Activated B cell treated with CpG ODN at 0.5 μM for 24 hours (primary cell): ENCODE measurements at regions of chr20 and their contacts with region 1.

Region 1: GRCh38 chr20:45971675-45972499 is at the start of gene ZNF335:
- DNase-seq: peak; percentile 99
- ATAC-seq: peak; percentile 82
- H3K4me3 Mint-ChIP-seq: peak within 1 kb of the TSS; percentile 94
- H3K27ac Mint-ChIP-seq: peak within 1 kb of the TSS; percentile 100
- H3K4me1 Mint-ChIP-seq: peaks cover 25% of the 10 kb centered on the region
- H3K27me3 Mint-ChIP-seq: no peaks in the 10 kb centered on the region
- CTCF ChIP-seq: no peak
- total RNA-seq, gene ZNF335: 39.2 and 49.6 TPM in 2 replicates

Region 2: DNA sequence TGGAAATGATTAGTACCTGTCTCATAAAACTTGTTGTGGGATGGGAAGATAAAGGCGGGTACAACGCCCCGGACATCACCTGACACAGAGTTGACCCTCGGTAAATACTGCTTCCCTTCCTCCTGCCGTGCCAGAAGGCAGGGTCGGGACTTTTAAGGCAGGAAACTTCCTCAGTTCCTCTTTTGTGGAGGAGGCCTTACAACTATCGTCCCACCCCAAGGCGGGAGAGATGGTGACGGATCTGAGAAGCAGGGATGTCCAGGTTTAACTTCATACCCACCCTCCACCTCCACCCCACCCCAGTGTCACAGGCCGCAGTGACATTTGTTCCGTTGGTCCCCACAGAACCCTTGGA is 179.6 kb before region 1 on chr20:
- CTCF ChIA-PET with region 1: no interaction called
- POLR2A ChIA-PET with region 1: interaction called, 10 read pairs
- intact Hi-C with region 1: loop called (anchors 2 kb)
- DNase-seq: no peak
- ATAC-seq: peak; percentile 28
- H3K4me3 Mint-ChIP-seq: peak overlapping the region; percentile 92
- H3K27ac Mint-ChIP-seq: peak overlapping the region; percentile 82
- H3K4me1 Mint-ChIP-seq: peaks cover 16% of the 10 kb centered on the region
- H3K27me3 Mint-ChIP-seq: no peaks in the 10 kb centered on the region
- CTCF ChIP-seq: no peak

Region 3: DNA sequence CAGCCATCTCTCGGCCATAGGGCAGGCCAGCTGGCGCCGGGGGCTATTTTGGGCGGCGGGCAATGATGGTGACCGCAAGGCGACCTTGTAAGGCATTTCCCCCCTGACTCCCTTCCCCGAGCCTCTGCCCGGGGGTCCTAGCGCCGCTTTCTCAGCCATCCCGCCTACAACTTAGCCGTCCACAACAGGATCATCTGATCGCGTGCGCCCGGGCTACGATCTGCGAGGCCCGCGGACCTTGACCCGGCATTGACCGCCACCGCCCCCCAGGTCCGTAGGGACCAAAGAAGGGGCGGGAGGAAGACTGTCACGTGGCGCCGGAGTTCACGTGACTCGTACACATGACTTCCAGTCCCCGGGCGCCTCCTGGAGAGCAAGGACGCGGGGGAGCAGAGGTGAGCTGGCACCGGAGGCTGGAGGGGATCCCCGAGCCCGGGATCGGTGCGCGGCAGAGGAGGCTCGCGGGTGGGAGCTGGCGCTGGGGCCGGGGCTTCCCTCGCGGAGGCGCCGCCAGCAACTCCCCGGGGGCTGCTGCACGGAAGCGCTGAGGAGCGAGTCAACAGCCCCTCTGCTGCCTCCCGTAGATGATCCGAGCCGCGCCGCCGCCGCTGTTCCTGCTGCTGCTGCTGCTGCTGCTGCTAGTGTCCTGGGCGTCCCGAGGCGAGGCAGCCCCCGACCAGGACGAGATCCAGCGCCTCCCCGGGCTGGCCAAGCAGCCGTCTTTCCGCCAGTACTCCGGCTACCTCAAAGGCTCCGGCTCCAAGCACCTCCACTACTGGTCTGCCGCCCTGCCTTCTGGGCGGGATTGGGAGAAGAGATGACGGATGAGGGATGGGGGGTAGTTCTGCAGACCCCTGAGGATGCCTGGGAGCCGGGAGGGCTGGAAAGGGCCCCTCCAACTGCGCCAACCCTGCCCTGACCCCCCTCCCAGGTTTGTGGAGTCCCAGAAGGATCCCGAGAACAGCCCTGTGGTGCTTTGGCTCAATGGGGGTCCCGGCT is 80.6 kb before region 1 on chr20 and contains the starts of genes CTSA and NEURL2:
- CTCF ChIA-PET with region 1: interaction called, 11 read pairs
- POLR2A ChIA-PET with region 1: interaction called, 13 read pairs
- intact Hi-C with region 1: loop called (anchors 1 kb)
- DNase-seq: peak; percentile 86
- ATAC-seq: peak; percentile 87
- H3K4me3 Mint-ChIP-seq: peak within 1 kb of the TSS; percentile 93
- H3K27ac Mint-ChIP-seq: peak within 1 kb of the TSS; percentile 87
- H3K4me1 Mint-ChIP-seq: peaks cover 30% of the 10 kb centered on the region
- H3K27me3 Mint-ChIP-seq: no peaks in the 10 kb centered on the region
- CTCF ChIP-seq: no peak
- total RNA-seq, gene CTSA: 61.9 and 67.2 TPM in 2 replicates
- total RNA-seq, gene NEURL2: 1.1 and 2.0 TPM in 2 replicates

Region 4: DNA sequence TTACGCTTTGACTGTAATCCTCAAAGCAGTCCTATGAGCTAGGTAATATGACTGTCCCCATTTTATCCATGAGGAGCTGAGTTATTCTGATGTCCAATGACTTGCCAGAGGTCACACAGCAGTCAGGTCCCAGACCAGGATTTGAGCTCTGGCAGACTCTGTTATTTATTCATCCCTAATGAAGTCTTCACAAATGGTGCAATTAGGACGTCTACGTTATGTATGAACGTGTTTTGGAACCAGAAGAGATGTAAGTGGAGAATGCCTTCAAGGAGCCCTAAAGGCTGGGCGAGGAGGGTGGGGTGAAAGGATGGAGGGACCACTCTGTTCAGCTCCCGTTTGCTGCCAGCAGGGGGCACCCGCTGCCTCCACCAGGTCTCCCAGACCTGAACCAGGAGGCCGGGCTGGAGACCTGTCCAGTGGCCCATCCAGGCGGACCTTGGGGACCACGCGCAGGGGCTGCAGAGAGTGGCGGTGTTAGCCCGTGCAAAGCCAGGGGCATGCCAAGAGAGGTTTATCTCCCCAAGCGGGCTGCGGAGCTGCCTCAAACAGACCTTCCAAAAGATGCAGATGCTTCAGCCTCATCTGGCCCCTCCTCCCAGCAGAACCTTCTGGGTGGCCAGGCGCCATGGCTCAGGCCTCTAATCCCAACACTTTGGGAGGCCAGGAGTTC is 15.4 kb after region 1 on chr20:
- CTCF ChIA-PET with region 1: interaction called, 13 read pairs
- POLR2A ChIA-PET with region 1: interaction called, 3 read pairs
- intact Hi-C with region 1: no loop called
- DNase-seq: peak; percentile 70
- ATAC-seq: peak; percentile 97
- H3K4me3 Mint-ChIP-seq: no peak overlapping the region
- H3K27ac Mint-ChIP-seq: no peak overlapping the region
- H3K4me1 Mint-ChIP-seq: peaks cover 5% of the 10 kb centered on the region
- H3K27me3 Mint-ChIP-seq: peaks cover 13% of the 10 kb centered on the region
- CTCF ChIP-seq: no peak

Region 5: DNA sequence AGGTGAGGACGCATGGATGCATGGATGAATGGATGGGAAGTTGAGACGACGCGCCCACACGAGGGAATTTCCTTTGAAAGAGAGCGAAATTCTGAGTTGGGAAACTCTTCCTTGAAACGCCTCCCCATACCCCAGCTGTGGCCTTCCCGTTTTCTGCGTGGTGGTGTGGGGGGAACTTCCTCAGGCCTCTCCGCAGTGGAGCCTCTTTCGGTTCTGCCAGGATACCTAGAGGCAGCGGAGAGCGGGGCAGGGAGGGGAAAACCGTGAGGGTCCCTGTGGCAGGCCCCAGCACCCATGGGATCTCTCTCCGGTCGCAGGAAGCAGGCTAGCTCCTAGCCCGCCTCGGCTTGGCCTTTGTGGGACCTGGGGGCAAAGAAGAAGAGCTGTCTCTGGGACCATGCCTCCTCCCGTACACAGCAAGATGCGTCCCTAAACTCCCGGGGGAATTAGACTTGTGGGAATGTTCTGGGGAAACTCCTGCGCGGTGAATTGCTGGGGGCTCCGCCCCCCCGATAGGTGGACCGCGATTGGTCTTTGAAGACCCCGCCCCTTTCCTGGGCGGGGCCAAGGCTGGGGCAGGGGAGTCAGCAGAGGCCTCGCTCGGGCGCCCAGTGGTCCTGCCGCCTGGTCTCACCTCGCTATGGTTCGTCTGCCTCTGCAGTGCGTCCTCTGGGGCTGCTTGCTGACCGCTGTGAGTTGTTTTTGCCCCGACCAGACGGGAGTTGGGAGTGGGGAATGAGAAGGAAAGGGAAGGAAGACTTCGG is 146.0 kb after region 1 on chr20 and contains the start of gene CD40:
- CTCF ChIA-PET with region 1: interaction called, 3 read pairs
- POLR2A ChIA-PET with region 1: interaction called, 12 read pairs
- intact Hi-C with region 1: loop called (anchors 1 kb)
- DNase-seq: peak; percentile 91
- ATAC-seq: peak; percentile 76
- H3K4me3 Mint-ChIP-seq: peak within 1 kb of the TSS; percentile 100
- H3K27ac Mint-ChIP-seq: peak within 1 kb of the TSS; percentile 100
- H3K4me1 Mint-ChIP-seq: peaks cover 60% of the 10 kb centered on the region
- H3K27me3 Mint-ChIP-seq: no peaks in the 10 kb centered on the region
- CTCF ChIP-seq: no peak
- total RNA-seq, gene CD40: 410 and 464 TPM in 2 replicates

Region 6: DNA sequence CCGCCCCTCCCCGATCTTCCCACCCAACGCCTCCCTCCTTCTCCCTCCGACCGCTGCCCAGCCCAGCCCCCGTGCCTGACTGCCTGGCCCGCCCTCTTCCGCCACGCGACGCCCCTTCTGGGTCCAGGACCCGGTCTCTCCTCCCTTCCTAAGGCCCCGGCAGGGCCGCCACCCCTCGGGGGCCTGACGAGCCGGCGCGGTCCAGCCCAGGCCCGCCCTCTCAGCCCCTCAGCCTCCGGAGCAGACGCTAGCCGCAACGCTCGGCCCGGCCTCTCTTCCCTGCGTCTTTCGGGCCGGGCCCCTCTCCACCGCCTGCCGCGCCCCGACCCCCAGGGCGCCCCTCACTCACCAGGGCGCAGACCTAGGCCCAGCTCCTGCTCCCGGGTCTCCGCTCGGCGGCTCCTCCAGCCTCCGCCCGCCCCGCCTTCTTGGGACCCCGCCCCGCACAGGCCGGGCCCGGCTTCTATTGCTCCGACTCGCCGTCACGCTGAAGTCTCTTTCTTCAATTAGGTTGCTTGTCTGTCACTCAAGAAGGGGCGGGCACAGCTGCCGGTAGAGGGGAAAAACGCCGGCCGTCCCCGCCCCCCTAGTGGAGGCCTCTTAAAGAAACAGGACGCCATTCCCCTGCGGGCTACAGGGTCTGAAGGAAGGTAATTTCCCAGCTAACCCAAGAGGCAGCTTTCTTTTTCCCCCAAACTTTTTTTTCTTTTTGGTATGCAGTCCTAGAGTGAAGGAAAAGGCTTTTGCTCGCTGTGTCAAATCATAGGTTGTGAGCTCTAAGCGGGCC is 434.5 kb after region 1 on chr20 and contains the start of gene ELMO2:
- CTCF ChIA-PET with region 1: no interaction called
- POLR2A ChIA-PET with region 1: no interaction called
- intact Hi-C with region 1: loop called (anchors 1 kb)
- DNase-seq: peak; percentile 90
- ATAC-seq: peak; percentile 90
- H3K4me3 Mint-ChIP-seq: peak within 1 kb of the TSS; percentile 94
- H3K27ac Mint-ChIP-seq: peak within 1 kb of the TSS; percentile 88
- H3K4me1 Mint-ChIP-seq: peaks cover 47% of the 10 kb centered on the region
- H3K27me3 Mint-ChIP-seq: no peaks in the 10 kb centered on the region
- CTCF ChIP-seq: no peak
- total RNA-seq, gene ELMO2: 39.0 and 45.6 TPM in 2 replicates

Region 7: DNA sequence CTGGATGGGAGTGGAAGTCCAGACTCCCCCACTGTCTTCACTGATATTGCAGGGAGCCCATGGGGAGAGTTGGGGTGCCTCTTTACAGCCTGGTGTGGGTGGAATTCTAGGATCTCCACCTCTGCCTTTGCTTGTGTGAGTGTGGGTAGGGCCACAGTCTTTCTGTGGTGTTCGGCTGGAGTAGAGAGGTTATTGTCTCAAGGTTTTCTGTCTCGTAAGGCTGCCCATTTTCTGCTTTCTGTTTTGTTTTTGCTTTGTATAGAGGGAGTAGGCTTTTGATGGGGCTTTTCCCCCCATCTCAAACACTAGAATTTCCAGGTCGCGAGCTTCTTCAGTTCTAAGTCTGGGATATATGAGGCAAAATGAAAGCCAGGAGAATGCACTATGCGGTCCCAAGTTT is 475.0 kb after region 1 on chr20:
- CTCF ChIA-PET with region 1: no interaction called
- POLR2A ChIA-PET with region 1: no interaction called
- intact Hi-C with region 1: no loop called
- DNase-seq: no peak
- ATAC-seq: no peak
- H3K4me3 Mint-ChIP-seq: no peak overlapping the region
- H3K27ac Mint-ChIP-seq: no peak overlapping the region
- H3K4me1 Mint-ChIP-seq: no peaks in the 10 kb centered on the region
- H3K27me3 Mint-ChIP-seq: peaks cover 33% of the 10 kb centered on the region
- CTCF ChIP-seq: no peak